Heart left ventricle (tissue), 16 donors: ENCODE measurements at regions of chr2 and their contacts with region 1.

Region 1: DNA sequence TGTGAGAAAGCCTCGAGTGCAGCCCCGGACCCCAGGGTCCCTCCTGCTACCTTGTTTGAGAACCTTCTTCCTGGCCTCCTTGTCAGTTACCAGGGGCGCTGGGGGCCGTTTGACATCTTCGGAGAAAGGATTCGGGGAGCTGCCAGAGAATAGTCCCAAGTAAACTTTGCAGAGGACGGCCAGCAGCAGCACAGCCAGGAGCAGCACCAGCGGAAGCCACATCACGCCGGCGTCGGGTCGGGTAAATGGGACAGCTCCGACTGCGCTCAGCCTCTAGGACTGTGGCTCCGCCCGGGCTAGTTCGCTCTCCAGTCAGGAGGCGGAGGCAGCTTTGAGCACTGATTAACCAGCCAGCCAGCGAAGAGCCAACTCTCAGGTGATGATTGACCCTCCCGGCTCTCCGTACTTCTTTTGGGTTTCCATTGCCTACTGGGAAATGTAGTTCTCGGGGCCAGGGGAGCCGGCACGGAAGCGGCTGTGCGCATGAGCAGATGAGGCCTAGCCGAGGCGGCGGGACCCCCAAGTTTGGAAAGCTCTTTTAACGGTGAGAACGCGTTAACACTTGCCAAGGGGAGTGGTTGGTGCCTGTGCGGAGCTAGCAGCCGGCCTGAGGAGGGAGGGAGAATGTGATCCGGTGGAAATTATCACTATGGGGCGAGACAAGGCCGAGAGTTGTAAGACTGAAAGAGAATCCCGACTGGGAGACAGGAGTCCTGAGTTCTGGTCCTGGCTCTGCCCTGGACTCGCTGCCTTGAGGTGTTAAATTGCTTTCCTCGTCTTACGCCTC is at the starts of genes ELMOD3 and RETSAT:
- DNase-seq: peak; percentile 97 to 99 (median 99)
- ATAC-seq: peak; percentile 97 to 99 (median 98)
- H3K4me3 ChIP-seq: peak within 1 kb of the TSS; percentile 57 to 89 (median 76)
- H3K27ac ChIP-seq: peak within 1 kb of the TSS; percentile 51 to 92 (median 88)
- H3K4me1 ChIP-seq: peaks cover 0 to 37% (median 21%) of the 10 kb centered on the region in 12 donors
- H3K27me3 ChIP-seq: no peaks in the 10 kb centered on the region
- CTCF ChIP-seq: no peak
- POLR2A ChIP-seq: peak; percentile 60 to 96
- total RNA-seq, gene ELMOD3: 6.0 to 18.0 (median 9.5) TPM
- total RNA-seq, gene RETSAT: 27.5 to 74.9 (median 50.9) TPM

Region 2: DNA sequence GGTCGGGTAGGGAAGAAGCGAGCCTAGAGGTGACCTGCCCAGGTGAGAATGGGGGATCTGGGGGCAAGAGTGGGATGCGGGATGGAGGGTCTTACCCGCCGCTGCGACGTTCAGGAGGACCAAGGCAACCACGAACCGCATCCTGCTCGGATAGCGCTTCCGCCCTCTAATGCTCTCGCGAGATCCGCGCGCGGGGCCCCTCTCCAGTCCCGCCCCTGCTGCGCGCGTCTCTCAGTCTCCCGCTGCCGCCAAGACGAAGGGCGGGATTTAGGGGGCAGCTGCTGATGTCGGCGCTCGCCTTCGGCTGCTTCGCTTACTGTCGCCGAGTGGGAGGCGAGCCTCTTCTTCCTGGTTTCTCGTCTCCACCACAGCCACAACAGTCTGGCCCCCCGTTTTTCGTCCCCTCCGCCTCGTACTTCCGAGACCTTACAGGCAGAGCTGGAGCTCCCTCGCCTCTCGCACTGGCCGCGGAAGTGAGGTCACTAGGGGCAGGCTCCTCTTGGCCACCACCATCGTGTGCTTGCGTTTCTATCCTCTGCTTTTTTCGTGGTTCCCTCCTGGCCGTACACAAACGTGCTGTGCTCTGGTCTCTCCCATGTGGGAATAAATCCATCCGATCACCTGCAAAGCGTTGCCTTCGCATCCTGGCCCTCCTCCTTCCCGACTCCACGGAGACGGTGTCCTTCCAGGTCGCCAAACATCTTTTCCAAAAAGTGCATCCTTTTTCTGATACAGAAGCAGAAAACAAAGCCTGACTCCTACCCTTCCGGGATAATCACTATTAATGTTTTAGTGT is 26.5 kb before region 1 on chr2 and contains the start of gene TGOLN2:
- intact Hi-C with region 1: loop called in 1 of 10 experiments (anchors 1 kb)
- DNase-seq: peak; percentile 95 to 97 (median 95)
- ATAC-seq: peak; percentile 97 to 98 (median 98)
- H3K4me3 ChIP-seq: peak within 1 kb of the TSS; percentile 45 to 88 (median 76)
- H3K27ac ChIP-seq: peak within 1 kb of the TSS; percentile 94 to 99 (median 98)
- H3K4me1 ChIP-seq: peaks cover 2 to 52% (median 42%) of the 10 kb centered on the region in 12 donors
- H3K27me3 ChIP-seq: no peaks in the 10 kb centered on the region
- CTCF ChIP-seq: peak in 3 of 12 donors; percentile 6 to 43 (median 30)
- POLR2A ChIP-seq: peak; percentile 42 to 97
- total RNA-seq, gene TGOLN2: 70.7 to 130 (median 83.5) TPM

Region 3: GRCh38 chr2:85504778-85505323 is 150.4 kb after region 1 on chr2:
- intact Hi-C with region 1: no loop called
- DNase-seq: peak in 2 of 5 donors; percentile 61 to 76
- ATAC-seq: peak in 3 of 4 donors; percentile 72 to 85 (median 85)
- H3K4me3 ChIP-seq: no peak overlapping the region
- H3K27ac ChIP-seq: peak overlapping the region in 11 of 12 donors; percentile 2 to 66 (median 52)
- H3K4me1 ChIP-seq: peaks cover 0 to 66% (median 39%) of the 10 kb centered on the region in 12 donors
- H3K27me3 ChIP-seq: no peaks in the 10 kb centered on the region
- CTCF ChIP-seq: no peak
- POLR2A ChIP-seq: no peak

Region 4: DNA sequence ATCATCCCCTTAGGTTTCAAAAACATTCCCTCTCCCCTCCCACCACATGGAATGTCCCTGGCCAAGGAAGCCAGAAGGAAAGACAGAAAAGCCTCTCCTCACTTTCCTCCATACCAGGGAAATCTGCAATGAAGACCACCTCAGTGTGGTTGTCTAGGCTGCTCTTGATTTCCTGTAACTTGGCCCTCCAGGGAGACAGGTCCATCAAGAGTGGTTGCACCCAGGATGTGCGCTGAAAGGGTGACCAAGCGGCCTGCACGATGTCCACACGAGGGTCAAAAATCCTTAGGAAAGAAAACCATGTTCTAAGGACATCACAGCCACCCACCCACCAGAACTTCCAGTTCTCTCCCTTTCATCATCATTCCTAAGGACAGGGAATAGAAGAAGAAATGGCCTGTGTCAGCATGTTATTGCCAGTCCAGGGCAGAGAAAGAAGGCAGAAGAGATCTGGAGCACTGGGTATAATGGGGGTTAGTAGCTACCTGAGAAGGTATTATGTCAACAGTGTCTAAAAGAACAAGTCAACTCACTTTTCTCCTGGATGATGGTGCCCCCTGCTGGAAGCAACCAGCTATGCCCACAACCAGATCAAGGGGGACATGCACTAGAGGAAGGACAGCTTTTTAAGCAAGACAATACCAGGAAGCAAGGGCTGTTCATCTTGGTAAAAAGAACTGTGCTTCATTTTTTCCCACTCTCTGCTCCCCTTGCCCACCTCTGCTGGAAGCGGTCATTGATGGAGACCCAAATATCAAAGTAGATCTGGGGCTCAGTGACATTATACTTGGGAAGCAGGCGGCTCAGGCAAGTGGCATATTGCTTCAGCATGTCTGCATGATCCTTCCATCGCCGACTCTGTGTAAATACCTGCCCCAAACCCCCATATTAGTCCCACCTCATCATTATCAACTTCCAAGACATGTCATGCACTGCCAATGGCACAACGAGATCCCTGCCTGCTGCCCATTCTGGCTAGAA is 197.5 kb after region 1 on chr2:
- intact Hi-C with region 1: loop called in 1 of 10 experiments (anchors 5 kb)
- DNase-seq: peak; percentile 71 to 85 (median 79)
- ATAC-seq: peak; percentile 55 to 75 (median 64)
- H3K4me3 ChIP-seq: no peak overlapping the region
- H3K27ac ChIP-seq: peak overlapping the region in 2 of 12 donors; percentile 17 to 55
- H3K4me1 ChIP-seq: peaks cover 0 to 26% (median 0%) of the 10 kb centered on the region in 12 donors
- H3K27me3 ChIP-seq: no peaks in the 10 kb centered on the region
- CTCF ChIP-seq: peak; percentile 83 to 95 (median 90)
- POLR2A ChIP-seq: no peak